Endothelial cell of umbilical vein (primary cell): ENCODE measurements at regions of chr4 and their contacts with region 1.

Region 1: DNA sequence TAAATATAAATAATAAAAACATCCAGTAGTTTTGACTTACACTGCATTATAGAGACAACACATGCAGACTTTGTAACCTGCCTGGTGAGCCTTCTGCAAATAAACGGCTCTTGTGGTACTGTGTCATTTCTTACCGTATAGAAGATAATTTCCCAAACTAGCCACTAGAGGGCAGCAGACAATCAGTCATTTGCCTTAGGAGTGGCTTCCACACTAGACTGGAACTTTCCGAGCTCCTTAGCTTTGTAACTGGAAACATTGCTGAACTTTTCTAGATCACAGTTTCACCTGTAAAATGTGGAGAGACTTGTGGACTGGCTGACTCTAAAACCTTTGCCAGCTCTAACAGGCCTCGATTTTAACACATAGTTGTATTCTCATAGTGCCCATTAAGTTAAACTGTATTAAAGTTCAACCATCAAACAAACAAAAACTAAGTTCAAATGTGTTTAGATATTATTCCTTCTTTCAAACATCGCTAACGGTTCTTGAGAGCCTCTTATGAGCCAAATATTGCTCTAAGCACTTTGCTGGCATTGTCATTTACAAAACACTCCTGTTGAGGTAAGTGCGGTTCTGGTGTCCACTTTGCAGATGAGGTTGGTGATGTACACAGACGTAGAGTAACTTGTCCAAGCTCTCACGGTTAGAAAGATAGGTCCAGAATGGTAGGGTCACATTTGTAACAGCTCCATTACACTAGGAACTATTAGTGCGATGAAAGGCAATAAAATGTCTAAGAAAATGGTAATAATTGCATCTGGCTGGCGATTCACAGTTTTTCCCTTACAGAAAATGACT is 345.5 kb downstream of the ANK2 start:
- DNase-seq: peak; percentile 92
- H3K4me3 ChIP-seq: no peak overlapping the region
- H3K27ac ChIP-seq: no peak overlapping the region
- H3K4me1 ChIP-seq: peaks cover 6% of the 10 kb centered on the region
- H3K27me3 ChIP-seq: no peaks in the 10 kb centered on the region
- CTCF ChIP-seq: peak; percentile 43 to 50
- POLR2A ChIP-seq: no peak

Region 2: DNA sequence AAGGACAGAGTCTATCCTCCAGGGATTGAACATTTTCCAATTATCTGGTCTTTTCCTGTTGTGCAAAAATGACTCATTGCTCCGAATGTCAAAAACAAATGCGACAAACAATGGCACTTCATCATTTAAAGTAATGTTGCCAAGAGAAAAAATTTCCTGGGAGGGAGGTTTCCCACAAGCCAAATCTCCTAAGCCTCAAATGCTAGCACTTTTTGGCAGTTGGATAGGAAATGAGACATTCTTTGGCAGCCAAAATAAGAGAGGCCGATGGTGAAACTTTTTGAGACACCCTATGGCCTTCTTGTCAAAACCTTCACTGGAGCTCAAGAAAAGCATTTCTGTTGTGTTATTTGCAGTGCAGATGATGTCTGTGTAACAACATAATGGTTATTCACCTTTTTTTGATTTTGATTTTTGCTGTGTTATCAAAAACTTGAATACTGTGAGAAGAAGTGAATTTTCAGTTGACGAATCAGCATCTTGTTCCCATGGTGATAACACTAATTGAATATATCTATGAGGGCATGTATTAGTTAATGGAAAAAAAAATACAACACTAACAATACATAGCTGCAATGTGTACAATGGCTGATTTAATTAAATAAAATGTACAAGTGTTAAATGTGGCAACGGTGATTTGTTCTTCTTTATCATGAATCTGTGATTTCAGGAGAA is 11.7 kb before region 1 on chr4:
- CTCF ChIA-PET with region 1: interaction called, 12 read pairs
- POLR2A ChIA-PET with region 1: no interaction called
- dilution Hi-C with region 1: no loop called
- intact Hi-C with region 1: no loop called
- DNase-seq: peak; percentile 82
- H3K4me3 ChIP-seq: no peak overlapping the region
- H3K27ac ChIP-seq: peak overlapping the region; percentile 57
- H3K4me1 ChIP-seq: peaks cover 29% of the 10 kb centered on the region
- H3K27me3 ChIP-seq: no peaks in the 10 kb centered on the region
- CTCF ChIP-seq: no peak
- POLR2A ChIP-seq: no peak

Region 3: GRCh38 chr4:113547487-113548042 is 152.6 kb after region 1 on chr4:
- CTCF ChIA-PET with region 1: interaction called, 22 read pairs
- POLR2A ChIA-PET with region 1: no interaction called
- dilution Hi-C with region 1: no loop called
- intact Hi-C with region 1: loop called (anchors 1 kb)
- DNase-seq: peak; percentile 96
- H3K4me3 ChIP-seq: no peak overlapping the region
- H3K27ac ChIP-seq: peak overlapping the region; percentile 4
- H3K4me1 ChIP-seq: peaks cover 3% of the 10 kb centered on the region
- H3K27me3 ChIP-seq: no peaks in the 10 kb centered on the region
- CTCF ChIP-seq: peak; percentile 92 to 98
- POLR2A ChIP-seq: no peak

Region 4: GRCh38 chr4:113878668-113879067 is 483.7 kb after region 1 on chr4:
- CTCF ChIA-PET with region 1: interaction called, 5 read pairs
- POLR2A ChIA-PET with region 1: no interaction called
- dilution Hi-C with region 1: no loop called
- intact Hi-C with region 1: loop called (anchors 2 kb)
- DNase-seq: peak; percentile 40
- H3K4me3 ChIP-seq: no peak overlapping the region
- H3K27ac ChIP-seq: no peak overlapping the region
- H3K4me1 ChIP-seq: peaks cover 16% of the 10 kb centered on the region
- H3K27me3 ChIP-seq: no peaks in the 10 kb centered on the region
- CTCF ChIP-seq: peak; percentile 25 to 30
- POLR2A ChIP-seq: no peak

Region 5: DNA sequence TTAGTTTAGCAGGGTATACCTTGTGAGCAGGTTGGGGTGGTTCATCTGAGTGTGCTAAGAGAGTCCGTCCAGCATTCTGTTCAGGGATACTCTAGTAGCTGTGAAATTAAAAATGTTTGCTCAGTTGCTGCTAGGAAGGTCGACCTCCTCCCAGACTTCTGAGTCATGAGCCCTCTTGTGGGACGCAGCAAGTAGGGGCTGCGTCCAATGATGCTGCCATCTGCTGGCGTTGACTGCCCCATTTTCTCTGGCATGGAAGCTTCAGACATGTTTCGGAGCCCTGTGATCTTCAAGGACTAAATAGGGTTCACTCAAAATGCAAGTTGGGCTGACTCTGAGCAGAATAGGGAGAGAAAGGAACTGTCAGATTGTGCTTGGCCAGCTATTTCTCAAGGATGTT is 785.6 kb after region 1 on chr4:
- CTCF ChIA-PET with region 1: interaction called, 7 read pairs
- POLR2A ChIA-PET with region 1: no interaction called
- dilution Hi-C with region 1: no loop called
- intact Hi-C with region 1: loop called (anchors 1 kb)
- DNase-seq: peak; percentile 87
- H3K4me3 ChIP-seq: no peak overlapping the region
- H3K27ac ChIP-seq: no peak overlapping the region
- H3K4me1 ChIP-seq: no peaks in the 10 kb centered on the region
- H3K27me3 ChIP-seq: no peaks in the 10 kb centered on the region
- CTCF ChIP-seq: peak; percentile 69 to 79
- POLR2A ChIP-seq: no peak

Region 6: GRCh38 chr4:114694770-114695169 is 1299.8 kb after region 1 on chr4:
- CTCF ChIA-PET with region 1: interaction called, 5 read pairs
- POLR2A ChIA-PET with region 1: no interaction called
- dilution Hi-C with region 1: no loop called
- intact Hi-C with region 1: loop called (anchors 10 kb)
- DNase-seq: peak; percentile 58
- H3K4me3 ChIP-seq: no peak overlapping the region
- H3K27ac ChIP-seq: no peak overlapping the region
- H3K4me1 ChIP-seq: peaks cover 4% of the 10 kb centered on the region
- H3K27me3 ChIP-seq: peaks cover 0 to 1% of the 10 kb centered on the region in 2 experiments
- CTCF ChIP-seq: peak; percentile 16
- POLR2A ChIP-seq: no peak